Caco-2 (cell line): ENCODE measurements at regions of chr20 and their contacts with region 1.

Region 1: GRCh38 chr20:13009682-13010406 is 1.1 kb downstream of the SPTLC3 start:
- DNase-seq: no peak
- H3K4me3 ChIP-seq: peak overlapping the region; percentile 51
- H3K4me3 Mint-ChIP-seq: peak overlapping the region; percentile 81
- H3K27ac Mint-ChIP-seq: peak overlapping the region; percentile 74
- H3K4me1 ChIP-seq: peaks cover 21% of the 10 kb centered on the region
- H3K4me1 Mint-ChIP-seq: peaks cover 25% of the 10 kb centered on the region
- H3K27me3 ChIP-seq: no peaks in the 10 kb centered on the region
- H3K27me3 Mint-ChIP-seq: no peaks in the 10 kb centered on the region
- CTCF ChIP-seq: no peak

Region 2: GRCh38 chr20:12627485-12627884 is 382.4 kb before region 1 on chr20:
- CTCF ChIA-PET with region 1: no interaction called
- POLR2A ChIA-PET with region 1: no interaction called
- intact Hi-C with region 1: no loop called
- DNase-seq: no peak
- H3K4me3 ChIP-seq: no peak overlapping the region
- H3K4me3 Mint-ChIP-seq: no peak overlapping the region
- H3K27ac Mint-ChIP-seq: no peak overlapping the region
- H3K4me1 ChIP-seq: no peaks in the 10 kb centered on the region
- H3K4me1 Mint-ChIP-seq: no peaks in the 10 kb centered on the region
- H3K27me3 ChIP-seq: no peaks in the 10 kb centered on the region; the same call in 1 of the 2 replicates
- H3K27me3 Mint-ChIP-seq: no peaks in the 10 kb centered on the region
- CTCF ChIP-seq: no peak

Region 3: DNA sequence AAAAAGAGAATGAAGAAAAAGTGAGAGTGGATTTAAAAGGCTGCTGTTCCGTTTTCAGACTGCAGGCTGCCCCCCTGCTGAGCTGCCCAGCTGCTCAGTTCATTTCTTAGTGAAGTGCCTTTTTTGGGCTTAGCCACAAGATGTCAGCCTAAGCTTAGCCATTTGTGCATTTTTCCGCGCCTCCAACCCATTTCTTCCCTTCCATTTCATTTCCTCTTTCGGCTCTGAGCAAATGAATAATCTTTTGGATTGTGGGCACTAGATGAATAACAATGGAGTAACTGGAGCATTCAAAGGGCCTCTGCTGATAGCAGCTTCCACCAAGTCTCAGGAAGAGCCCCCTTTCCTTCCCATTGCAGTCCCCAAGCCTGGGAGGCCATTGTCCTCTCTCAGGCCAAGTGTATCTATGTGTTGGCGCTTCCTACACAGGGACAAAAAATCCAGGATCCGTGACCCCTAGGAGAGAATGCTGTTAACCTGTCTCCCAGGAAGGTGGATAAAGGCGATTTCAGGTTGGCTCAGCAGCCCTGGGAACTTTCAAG is 84.6 kb before region 1 on chr20:
- CTCF ChIA-PET with region 1: interaction called, 3 read pairs
- POLR2A ChIA-PET with region 1: no interaction called
- intact Hi-C with region 1: loop called (anchors 1 kb)
- DNase-seq: peak; percentile 79
- H3K4me3 ChIP-seq: no peak overlapping the region
- H3K4me3 Mint-ChIP-seq: peak overlapping the region; percentile 43
- H3K27ac Mint-ChIP-seq: no peak overlapping the region
- H3K4me1 ChIP-seq: peaks cover 27% of the 10 kb centered on the region
- H3K4me1 Mint-ChIP-seq: peaks cover 23% of the 10 kb centered on the region
- H3K27me3 ChIP-seq: no peaks in the 10 kb centered on the region
- H3K27me3 Mint-ChIP-seq: no peaks in the 10 kb centered on the region
- CTCF ChIP-seq: peak; percentile 93 to 97

Region 4: GRCh38 chr20:12970372-12970821 is 39.4 kb before region 1 on chr20:
- CTCF ChIA-PET with region 1: no interaction called
- POLR2A ChIA-PET with region 1: no interaction called
- intact Hi-C with region 1: loop called (anchors 1 kb)
- DNase-seq: peak in 1 of 2 experiments; percentile 55
- H3K4me3 ChIP-seq: no peak overlapping the region
- H3K4me3 Mint-ChIP-seq: no peak overlapping the region
- H3K27ac Mint-ChIP-seq: no peak overlapping the region
- H3K4me1 ChIP-seq: peaks cover 4% of the 10 kb centered on the region; the same call in 1 of the 2 replicates
- H3K4me1 Mint-ChIP-seq: peaks cover 7% of the 10 kb centered on the region
- H3K27me3 ChIP-seq: no peaks in the 10 kb centered on the region
- H3K27me3 Mint-ChIP-seq: no peaks in the 10 kb centered on the region
- CTCF ChIP-seq: peak; percentile 52 to 61

Region 5: DNA sequence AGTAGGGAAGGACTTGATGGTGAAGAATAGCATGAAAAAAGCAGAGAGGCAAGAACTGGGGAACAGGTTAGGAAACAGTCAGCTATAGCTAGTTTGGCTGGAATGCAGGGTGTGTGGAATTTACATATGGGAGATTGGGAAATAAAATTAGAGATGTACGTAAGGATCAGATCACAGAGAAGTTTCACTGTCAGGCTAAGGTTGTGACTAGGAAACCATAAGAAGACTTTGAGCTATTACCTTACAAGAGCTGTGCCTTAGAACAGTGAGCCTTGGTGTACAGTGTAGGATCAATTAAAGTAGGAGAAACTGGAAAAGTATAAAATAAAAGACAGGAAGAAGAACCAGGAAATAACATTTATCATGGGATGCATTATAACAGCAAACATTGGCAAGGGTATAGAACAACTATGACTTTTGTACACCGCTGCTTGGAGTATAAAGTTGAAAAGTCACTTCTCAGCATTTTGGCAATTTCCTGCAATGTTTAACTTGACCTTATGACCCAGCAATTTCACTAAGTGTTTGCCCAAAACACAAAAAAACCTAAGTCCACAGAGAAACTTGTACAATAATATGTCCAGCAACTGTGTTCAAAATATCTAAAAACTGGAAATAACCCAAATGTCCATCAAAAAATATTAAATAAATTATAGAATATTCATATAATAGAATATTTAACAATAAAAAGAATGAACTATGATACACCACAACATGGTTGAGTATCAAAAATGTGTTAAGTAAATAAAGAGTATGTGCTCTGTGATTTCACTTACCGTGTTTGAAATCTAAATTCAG is 32.3 kb before region 1 on chr20:
- CTCF ChIA-PET with region 1: no interaction called
- POLR2A ChIA-PET with region 1: no interaction called
- intact Hi-C with region 1: loop called (anchors 2 kb)
- DNase-seq: no peak
- H3K4me3 ChIP-seq: no peak overlapping the region
- H3K4me3 Mint-ChIP-seq: peak overlapping the region; percentile 4
- H3K27ac Mint-ChIP-seq: peak overlapping the region; percentile 40
- H3K4me1 ChIP-seq: peaks cover 29% of the 10 kb centered on the region
- H3K4me1 Mint-ChIP-seq: peaks cover 19% of the 10 kb centered on the region
- H3K27me3 ChIP-seq: no peaks in the 10 kb centered on the region
- H3K27me3 Mint-ChIP-seq: no peaks in the 10 kb centered on the region
- CTCF ChIP-seq: no peak

Region 6: DNA sequence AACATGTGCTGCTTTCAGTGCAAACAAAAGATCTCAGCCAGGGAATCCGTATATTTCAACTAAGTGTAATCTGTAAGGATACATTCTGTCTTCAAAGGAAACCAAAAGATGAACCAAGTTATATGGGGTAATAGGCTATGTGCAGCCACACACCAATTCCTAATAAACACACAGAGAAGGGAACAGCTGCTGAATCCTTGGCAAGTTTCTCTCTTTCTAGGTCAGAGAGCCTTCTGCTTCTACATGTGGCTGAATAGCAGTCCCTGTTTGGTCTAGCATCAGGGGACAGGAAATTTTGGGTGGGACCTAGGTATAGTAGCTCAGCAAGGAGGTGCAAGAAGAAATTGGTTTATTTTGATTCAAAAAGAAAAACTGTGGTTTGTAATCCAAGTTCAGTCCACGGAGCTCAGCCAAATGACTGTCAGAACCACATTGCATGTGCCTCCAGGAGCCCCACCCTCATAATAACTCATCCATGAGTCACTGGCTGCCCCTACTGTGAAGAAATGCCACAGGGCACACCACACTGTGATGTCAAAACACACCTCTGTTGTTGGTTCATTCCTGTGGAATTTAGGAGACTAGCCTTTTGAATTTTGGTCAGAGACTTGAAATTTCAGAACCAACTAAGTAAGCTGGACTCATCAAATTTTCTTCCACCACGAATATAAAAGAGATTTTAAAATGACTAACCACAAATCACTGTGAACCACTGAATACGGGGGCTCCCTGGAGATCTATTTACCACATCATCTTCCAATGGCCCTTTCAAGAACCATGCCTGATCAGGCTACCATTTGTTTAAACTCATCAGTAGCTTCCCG is 20.1 kb after region 1 on chr20:
- CTCF ChIA-PET with region 1: no interaction called
- POLR2A ChIA-PET with region 1: no interaction called
- intact Hi-C with region 1: loop called (anchors 1 kb)
- DNase-seq: peak; percentile 66 to 75
- H3K4me3 ChIP-seq: no peak overlapping the region
- H3K4me3 Mint-ChIP-seq: peak overlapping the region; percentile 22
- H3K27ac Mint-ChIP-seq: peak overlapping the region; percentile 28
- H3K4me1 ChIP-seq: peaks cover 18% of the 10 kb centered on the region
- H3K4me1 Mint-ChIP-seq: peaks cover 14% of the 10 kb centered on the region
- H3K27me3 ChIP-seq: no peaks in the 10 kb centered on the region
- H3K27me3 Mint-ChIP-seq: no peaks in the 10 kb centered on the region
- CTCF ChIP-seq: no peak

Region 7: GRCh38 chr20:13085275-13085674 is 75.4 kb after region 1 on chr20:
- CTCF ChIA-PET with region 1: no interaction called
- POLR2A ChIA-PET with region 1: no interaction called
- intact Hi-C with region 1: no loop called
- DNase-seq: no peak
- H3K4me3 ChIP-seq: no peak overlapping the region
- H3K4me3 Mint-ChIP-seq: no peak overlapping the region
- H3K27ac Mint-ChIP-seq: no peak overlapping the region
- H3K4me1 ChIP-seq: peaks cover 13% of the 10 kb centered on the region
- H3K4me1 Mint-ChIP-seq: peaks cover 4% of the 10 kb centered on the region
- H3K27me3 ChIP-seq: no peaks in the 10 kb centered on the region
- H3K27me3 Mint-ChIP-seq: no peaks in the 10 kb centered on the region
- CTCF ChIP-seq: no peak

Region 8: DNA sequence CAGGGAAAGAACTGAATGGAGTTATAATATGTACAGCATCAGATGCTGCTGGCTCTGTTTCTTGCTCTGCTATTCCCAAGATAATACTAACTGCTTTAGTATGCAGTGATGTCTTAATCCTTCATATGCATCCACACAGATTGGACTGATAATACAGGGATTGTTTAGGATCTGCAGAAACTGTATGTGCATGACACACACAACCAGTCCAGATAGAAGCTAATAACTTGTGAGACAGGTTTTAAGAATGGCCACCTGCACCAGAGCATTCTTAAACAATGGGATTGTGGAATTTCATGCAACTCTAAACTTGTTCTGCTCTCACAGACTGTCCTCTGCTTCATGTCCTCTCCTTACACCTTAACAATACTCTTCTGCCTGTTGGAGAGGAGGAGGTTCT is 89.8 kb after region 1 on chr20:
- CTCF ChIA-PET with region 1: interaction called, 4 read pairs
- POLR2A ChIA-PET with region 1: no interaction called
- intact Hi-C with region 1: loop called (anchors 1 kb)
- DNase-seq: peak in 1 of 2 experiments; percentile 41
- H3K4me3 ChIP-seq: no peak overlapping the region
- H3K4me3 Mint-ChIP-seq: no peak overlapping the region
- H3K27ac Mint-ChIP-seq: peak overlapping the region; percentile 62
- H3K4me1 ChIP-seq: peaks cover 94% of the 10 kb centered on the region
- H3K4me1 Mint-ChIP-seq: peaks cover 69% of the 10 kb centered on the region
- H3K27me3 ChIP-seq: no peaks in the 10 kb centered on the region
- H3K27me3 Mint-ChIP-seq: no peaks in the 10 kb centered on the region
- CTCF ChIP-seq: no peak

Region 9: GRCh38 chr20:13105864-13106457 is 96.1 kb after region 1 on chr20:
- CTCF ChIA-PET with region 1: interaction called, 4 read pairs
- POLR2A ChIA-PET with region 1: no interaction called
- intact Hi-C with region 1: loop called (anchors 1 kb)
- DNase-seq: peak in 1 of 2 experiments; percentile 37
- H3K4me3 ChIP-seq: no peak overlapping the region
- H3K4me3 Mint-ChIP-seq: no peak overlapping the region
- H3K27ac Mint-ChIP-seq: no peak overlapping the region
- H3K4me1 ChIP-seq: peaks cover 46% of the 10 kb centered on the region
- H3K4me1 Mint-ChIP-seq: peaks cover 23% of the 10 kb centered on the region
- H3K27me3 ChIP-seq: no peaks in the 10 kb centered on the region
- H3K27me3 Mint-ChIP-seq: no peaks in the 10 kb centered on the region
- CTCF ChIP-seq: peak; percentile 70 to 71